ENCODE measurements at regions of chr18 and their contacts with region 1.

Region 1: DNA sequence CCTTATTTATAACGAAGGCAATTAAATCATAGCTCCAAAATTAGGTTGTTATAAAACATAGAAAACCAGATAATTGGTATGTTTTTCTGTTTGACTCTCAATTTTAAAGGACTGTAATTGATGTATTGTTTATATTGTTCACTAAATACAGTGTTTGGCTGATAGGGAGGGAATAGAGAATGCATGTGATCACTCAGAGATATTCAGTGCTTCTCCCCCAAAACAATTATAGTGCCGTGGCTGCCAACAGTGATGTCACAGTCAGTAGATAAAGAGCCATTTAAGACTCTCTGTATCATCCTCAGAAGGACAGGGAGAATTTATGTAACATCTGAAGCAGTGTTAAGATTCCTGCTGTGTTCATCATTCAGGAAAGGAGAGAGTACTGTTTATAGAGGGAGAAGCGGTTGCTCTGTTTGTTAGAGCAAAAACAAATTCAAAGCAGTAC is 69.6 kb downstream of the PHLPP1 start:
- DNase-seq: no peak
- H3K4me3 Mint-ChIP-seq: peak overlapping the region; percentile 38
- H3K27ac Mint-ChIP-seq: peak overlapping the region; percentile 93
- H3K4me1 Mint-ChIP-seq: peaks cover 77% of the 10 kb centered on the region
- H3K27me3 Mint-ChIP-seq: no peaks in the 10 kb centered on the region

Region 2: DNA sequence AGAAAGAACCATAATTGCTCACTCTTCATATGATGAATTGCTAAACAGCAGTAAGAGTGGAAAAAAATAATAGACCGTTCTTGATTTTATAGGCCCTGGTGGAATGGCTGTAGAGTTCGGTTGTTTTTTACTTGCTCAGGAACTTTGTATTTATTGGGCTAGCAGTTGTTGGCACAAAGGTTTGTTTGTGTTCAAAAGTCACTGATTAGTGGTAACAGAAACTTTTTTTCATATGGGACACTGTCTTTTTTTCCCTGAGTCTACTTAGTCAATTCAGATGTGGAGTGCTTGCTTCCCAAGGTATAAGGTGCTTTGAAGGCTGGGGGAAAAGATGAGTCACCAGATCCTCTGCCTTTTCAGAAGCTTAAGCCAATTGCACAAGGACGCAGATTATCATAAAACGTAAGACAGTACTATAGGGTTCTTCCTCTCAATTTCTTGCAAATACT is 43.8 kb before region 1 on chr18:
- intact Hi-C with region 1: loop called (anchors 1 kb)
- DNase-seq: no peak
- H3K4me3 Mint-ChIP-seq: no peak overlapping the region
- H3K27ac Mint-ChIP-seq: peak overlapping the region; percentile 40
- H3K4me1 Mint-ChIP-seq: peaks cover 35% of the 10 kb centered on the region
- H3K27me3 Mint-ChIP-seq: no peaks in the 10 kb centered on the region

Region 3: GRCh38 chr18:62771494-62772270 is 13.3 kb before region 1 on chr18:
- intact Hi-C with region 1: loop called (anchors 1 kb)
- DNase-seq: no peak
- H3K4me3 Mint-ChIP-seq: peak overlapping the region; percentile 24
- H3K27ac Mint-ChIP-seq: peak overlapping the region; percentile 87
- H3K4me1 Mint-ChIP-seq: peaks cover 58% of the 10 kb centered on the region
- H3K27me3 Mint-ChIP-seq: no peaks in the 10 kb centered on the region

Region 4: DNA sequence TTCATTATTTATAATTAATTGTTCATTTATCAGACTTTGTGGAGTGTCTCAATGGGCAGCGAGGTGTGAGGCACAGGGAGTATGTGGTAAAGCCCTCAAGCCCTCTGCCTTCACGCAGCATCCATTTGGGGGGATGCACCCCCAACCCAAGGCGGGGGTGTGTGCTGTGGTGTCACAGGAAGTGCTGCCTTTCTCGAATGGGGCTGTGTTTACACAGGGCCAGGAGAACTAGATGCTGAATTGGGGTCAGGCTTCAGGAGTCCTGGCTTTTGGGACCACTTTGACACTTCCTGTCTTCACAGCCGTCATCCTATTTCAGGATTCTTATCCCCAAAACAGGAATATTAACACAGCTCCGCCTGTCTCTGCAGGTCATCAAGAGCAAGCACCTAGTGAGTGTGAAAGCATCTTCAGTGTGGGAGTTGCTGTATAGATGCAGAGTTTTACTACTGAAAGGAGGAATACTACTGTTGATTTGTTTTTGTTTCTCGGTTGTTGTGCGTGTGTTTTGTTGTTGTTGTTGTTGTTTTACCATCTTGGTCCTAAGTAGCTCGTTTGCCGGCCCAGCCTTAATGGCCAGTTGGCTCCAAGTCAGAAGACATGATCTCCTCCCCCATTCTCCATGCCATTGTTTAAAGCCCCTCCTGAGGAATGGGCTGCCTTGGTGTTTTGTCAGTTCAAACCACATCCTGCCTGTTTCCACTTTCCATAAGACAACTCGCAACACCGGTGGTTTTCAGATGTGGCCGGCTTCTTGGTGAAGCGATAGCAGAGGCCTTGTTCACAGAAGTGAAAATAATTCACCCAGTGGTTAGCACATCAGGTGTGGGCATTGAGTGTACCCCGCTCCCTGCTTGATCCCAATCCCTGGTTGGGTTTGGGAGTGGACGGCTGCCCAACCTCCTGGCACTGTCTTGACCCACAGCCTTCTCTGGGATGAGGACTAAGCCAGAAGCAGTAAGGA is 313.3 kb after region 1 on chr18:
- intact Hi-C with region 1: loop called (anchors 10 kb)
- DNase-seq: peak; percentile 65
- H3K4me3 Mint-ChIP-seq: peak overlapping the region; percentile 47
- H3K27ac Mint-ChIP-seq: peak overlapping the region; percentile 80
- H3K4me1 Mint-ChIP-seq: peaks cover 49% of the 10 kb centered on the region
- H3K27me3 Mint-ChIP-seq: peaks cover 31% of the 10 kb centered on the region

Measured in activated T-helper 2 cell treated with anti-CD3 and anti-CD28 coated beads, Interferon-gamma antibody, Interleukin-2, Interleukin-4, amounts not matched to agents 10 μg/mL and 5 μg/mL and 100 μg/mL, durations not matched to agents 14 hours and 24 hours and 36 hours (primary cell).